ENCODE measurements at regions of chr9 and their contacts with region 1.

Region 1: GRCh38 chr9:101458955-101459631 is 23.5 kb upstream of the ALDOB start:
- DNase-seq: peak in 2 of 10 donors; percentile 26 to 38
- H3K4me3 ChIP-seq: no peak overlapping the region
- H3K27ac ChIP-seq: no peak overlapping the region
- H3K27me3 ChIP-seq: no peaks in the 10 kb centered on the region
- CTCF ChIP-seq: peak; percentile 50 to 92 (median 80)

Region 2: DNA sequence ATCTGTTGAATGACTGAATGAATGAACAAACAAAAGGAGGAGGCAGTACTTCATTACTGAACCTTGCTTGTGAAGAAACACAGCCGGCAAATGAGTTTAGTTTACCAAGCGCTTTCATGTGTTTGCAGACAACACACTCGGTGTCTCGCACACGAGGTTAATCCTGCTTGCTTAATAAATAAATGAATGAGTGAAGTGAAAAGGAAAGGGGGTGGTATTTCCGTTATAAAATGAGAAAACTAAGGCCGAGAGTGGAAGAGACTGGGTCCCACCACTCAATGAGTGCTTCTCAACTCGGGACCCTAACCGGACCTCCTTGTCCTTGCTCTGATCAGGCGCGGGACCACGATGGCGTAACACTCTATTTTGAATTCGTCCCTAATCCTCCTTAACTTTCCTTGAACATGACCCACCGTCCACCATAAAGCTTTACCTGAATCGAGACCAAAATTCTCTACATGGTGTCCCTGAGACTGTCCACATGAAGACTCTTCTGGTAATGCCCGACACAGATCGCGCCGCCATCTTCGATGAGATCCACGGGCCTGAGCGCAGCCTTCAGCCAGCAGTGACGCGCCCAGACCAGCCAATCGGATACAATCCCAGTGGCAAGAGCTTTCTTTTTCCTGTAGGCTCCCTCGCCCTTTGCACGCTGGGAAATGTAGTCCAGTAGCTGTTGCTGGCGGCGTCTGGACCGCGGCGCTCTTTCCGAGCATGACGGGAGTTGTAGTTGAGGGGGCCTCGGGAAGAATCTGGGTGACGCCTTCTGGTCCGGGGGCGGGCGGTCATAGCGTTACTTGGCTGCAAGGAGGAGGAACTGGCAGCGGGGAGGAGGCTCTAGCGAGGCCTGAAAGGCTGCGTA is 60.8 kb before region 1 on chr9 and contains the starts of genes MRPL50 and ZNF189:
- intact Hi-C with region 1: loop called in 1 of 2 experiments (anchors 5 kb)
- DNase-seq: peak; percentile 98 to 100 (median 100)
- H3K4me3 ChIP-seq: peak within 1 kb of the TSS; percentile 55 to 97 (median 85)
- H3K27ac ChIP-seq: peak within 1 kb of the TSS; percentile 49 to 96 (median 88)
- H3K27me3 ChIP-seq: no peaks in the 10 kb centered on the region
- CTCF ChIP-seq: peak in 31 of 56 donors; percentile 5 to 64 (median 35)
- total RNA-seq, gene MRPL50: 15.2 to 28.2 (median 22.3) TPM
- total RNA-seq, gene ZNF189: 30.0 to 78.6 (median 51.1) TPM

Region 3: GRCh38 chr9:101528015-101528414 is 68.9 kb after region 1 on chr9:
- intact Hi-C with region 1: loop called (anchors 2 kb)
- DNase-seq: no peak
- H3K4me3 ChIP-seq: no peak overlapping the region
- H3K27ac ChIP-seq: peak overlapping the region in 1 of 59 donors; percentile 12
- H3K27me3 ChIP-seq: no peaks in the 10 kb centered on the region
- CTCF ChIP-seq: no peak

Region 4: GRCh38 chr9:101533334-101534107 is 74.4 kb after region 1 on chr9 and contains the start of gene RNF20:
- intact Hi-C with region 1: loop called (anchors 2 kb)
- DNase-seq: peak; percentile 99 to 100 (median 100)
- H3K4me3 ChIP-seq: peak within 1 kb of the TSS; percentile 48 to 99 (median 92)
- H3K27ac ChIP-seq: peak within 1 kb of the TSS; percentile 35 to 100 (median 97)
- H3K27me3 ChIP-seq: no peaks in the 10 kb centered on the region
- CTCF ChIP-seq: peak in 22 of 56 donors; percentile 3 to 57 (median 28)
- total RNA-seq, gene RNF20: 43.0 to 74.0 (median 56.6) TPM